GM12878 (cell line): ENCODE measurements at regions of chr15 and their contacts with region 1.

Region 1: DNA sequence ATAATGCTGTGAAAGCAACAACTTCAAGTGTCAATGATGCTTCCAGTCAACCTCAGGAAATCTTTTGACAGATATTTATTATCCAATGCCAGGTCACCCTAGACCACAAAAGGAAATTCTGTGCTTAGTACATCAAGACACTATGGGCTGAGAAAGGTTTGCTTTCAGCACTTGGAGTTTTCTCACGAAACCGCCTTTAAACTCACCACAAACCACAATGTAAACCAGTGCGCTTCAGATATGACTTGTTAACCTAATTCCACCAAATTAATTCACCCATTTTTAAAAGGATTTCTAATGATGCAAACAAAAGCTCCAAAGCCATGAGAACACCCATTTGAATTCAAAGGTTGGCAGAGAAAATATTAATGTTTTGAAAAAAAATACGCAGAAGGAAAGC is 292.9 kb upstream of the NR2F2 start:
- DNase-seq: peak; percentile 93
- ATAC-seq: peak; percentile 73
- H3K4me3 ChIP-seq: no peak overlapping the region
- H3K27ac ChIP-seq: peak overlapping the region; percentile 6; the same call in 1 of the 2 replicates
- H3K4me1 ChIP-seq: peaks cover 37% of the 10 kb centered on the region
- H3K27me3 ChIP-seq: no peaks in the 10 kb centered on the region
- CTCF ChIP-seq: no peak
- EP300 ChIP-seq: peak; percentile 89 to 92
- POLR2A ChIP-seq: no peak
- RAD21 ChIP-seq: peak; percentile 10; the same call in 1 of the 2 replicates

Region 2: DNA sequence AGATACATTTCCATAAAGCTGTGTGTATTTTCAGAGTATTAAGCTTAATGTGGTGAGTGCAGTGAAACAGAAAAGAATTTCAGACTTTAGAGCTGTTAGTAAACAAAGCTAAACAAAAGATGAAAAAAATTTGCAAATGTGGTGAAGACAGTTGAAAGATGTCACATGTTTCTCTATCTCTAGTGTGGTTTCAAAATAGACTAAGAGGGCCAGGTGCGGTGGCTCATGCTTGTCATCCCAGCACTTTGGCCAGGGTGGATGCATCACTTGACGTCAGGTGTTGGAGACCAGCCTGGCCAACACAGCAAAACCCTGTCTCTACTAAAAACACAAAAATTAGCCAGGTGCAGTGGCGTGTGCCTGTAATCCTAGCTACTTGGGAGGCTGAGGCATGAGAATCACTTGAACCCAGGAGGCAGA is 173.1 kb before region 1 on chr15:
- CTCF ChIA-PET with region 1: no interaction called
- POLR2A ChIA-PET with region 1: no interaction called
- RAD21 ChIA-PET with region 1: interaction called, 4 read pairs
- SMC1A ChIA-PET with region 1: interaction called, 10 read pairs
- in situ Hi-C with region 1: no loop called
- intact Hi-C with region 1: loop called (anchors 5 kb)
- DNase-seq: peak; percentile 73
- ATAC-seq: peak; percentile 95
- H3K4me3 ChIP-seq: no peak overlapping the region
- H3K27ac ChIP-seq: no peak overlapping the region
- H3K4me1 ChIP-seq: peaks cover 6% of the 10 kb centered on the region; the same call in 1 of the 2 replicates
- H3K27me3 ChIP-seq: no peaks in the 10 kb centered on the region
- CTCF ChIP-seq: no peak
- EP300 ChIP-seq: peak; percentile 85 to 96
- POLR2A ChIP-seq: no peak
- RAD21 ChIP-seq: no peak

Region 3: GRCh38 chr15:95929232-95929846 is 108.2 kb before region 1 on chr15:
- CTCF ChIA-PET with region 1: interaction called, 3 read pairs
- POLR2A ChIA-PET with region 1: no interaction called
- RAD21 ChIA-PET with region 1: interaction called, 15 read pairs
- SMC1A ChIA-PET with region 1: interaction called, 7 read pairs
- in situ Hi-C with region 1: no loop called
- intact Hi-C with region 1: loop called (anchors 2 kb)
- DNase-seq: peak; percentile 48
- ATAC-seq: peak; percentile 98
- H3K4me3 ChIP-seq: no peak overlapping the region
- H3K27ac ChIP-seq: no peak overlapping the region
- H3K4me1 ChIP-seq: no peaks in the 10 kb centered on the region
- H3K27me3 ChIP-seq: no peaks in the 10 kb centered on the region
- CTCF ChIP-seq: no peak
- EP300 ChIP-seq: peak; percentile 69 to 86; a peak in 3 of 4 replicates
- POLR2A ChIP-seq: no peak
- RAD21 ChIP-seq: no peak

Region 4: DNA sequence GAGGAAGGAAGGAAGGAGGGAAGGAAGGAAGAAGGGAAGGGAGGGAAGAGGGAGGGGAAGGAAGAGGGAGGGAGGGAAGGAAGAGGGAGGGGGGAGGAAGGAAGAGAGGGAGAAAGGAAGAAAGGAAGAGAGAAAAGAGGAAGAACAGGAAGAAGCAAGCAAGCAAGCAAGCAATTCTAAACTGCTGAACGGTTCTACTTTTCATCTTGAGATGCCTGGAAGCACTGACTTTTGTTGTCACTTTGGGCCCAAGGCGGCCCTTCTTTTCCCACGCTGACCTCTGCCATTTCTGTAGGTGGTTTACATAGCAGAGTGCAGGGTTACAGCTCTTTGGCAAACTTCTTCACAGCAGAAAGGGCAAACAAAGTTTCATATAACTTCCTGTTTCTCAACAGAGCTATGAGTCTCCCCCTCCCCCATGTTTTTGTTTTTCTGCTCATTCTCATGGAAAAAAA is 49.2 kb before region 1 on chr15:
- CTCF ChIA-PET with region 1: no interaction called
- POLR2A ChIA-PET with region 1: interaction called, 8 read pairs
- RAD21 ChIA-PET with region 1: interaction called, 10 read pairs
- SMC1A ChIA-PET with region 1: interaction called, 21 read pairs
- in situ Hi-C with region 1: no loop called
- intact Hi-C with region 1: loop called (anchors 2 kb)
- DNase-seq: no peak
- ATAC-seq: peak; percentile 57
- H3K4me3 ChIP-seq: no peak overlapping the region
- H3K27ac ChIP-seq: no peak overlapping the region
- H3K4me1 ChIP-seq: peaks cover 16% of the 10 kb centered on the region
- H3K27me3 ChIP-seq: no peaks in the 10 kb centered on the region
- CTCF ChIP-seq: no peak
- EP300 ChIP-seq: no peak
- POLR2A ChIP-seq: no peak
- RAD21 ChIP-seq: no peak

Region 5: GRCh38 chr15:96321639-96322535 is 284.3 kb after region 1 on chr15:
- CTCF ChIA-PET with region 1: interaction called, 12 read pairs
- POLR2A ChIA-PET with region 1: interaction called, 6 read pairs
- RAD21 ChIA-PET with region 1: interaction called, 12 read pairs
- SMC1A ChIA-PET with region 1: interaction called, 20 read pairs
- in situ Hi-C with region 1: no loop called
- intact Hi-C with region 1: loop called (anchors 2 kb)
- DNase-seq: no peak
- ATAC-seq: peak; percentile 31
- H3K4me3 ChIP-seq: peak overlapping the region; percentile 47
- H3K27ac ChIP-seq: no peak overlapping the region
- H3K4me1 ChIP-seq: peaks cover 3% of the 10 kb centered on the region; the same call in 1 of the 2 replicates
- H3K27me3 ChIP-seq: peaks cover 0 to 18% of the 10 kb centered on the region in 2 experiments; a peak in 2 of 4 replicates
- CTCF ChIP-seq: peak in 1 of 3 experiments; percentile 17; a peak in 1 of 6 replicates
- EP300 ChIP-seq: no peak
- POLR2A ChIP-seq: no peak
- RAD21 ChIP-seq: no peak